Activated B cell treated with CpG ODN at 0.5 μM for 24 hours (primary cell): ENCODE measurements at regions of chr11 and their contacts with region 1.

Region 1: GRCh38 chr11:96342961-96343711 is at the start of gene MAML2:
- DNase-seq: peak; percentile 72
- ATAC-seq: peak; percentile 88
- H3K4me3 Mint-ChIP-seq: peak within 1 kb of the TSS; percentile 98
- H3K27ac Mint-ChIP-seq: peak within 1 kb of the TSS; percentile 95
- H3K4me1 Mint-ChIP-seq: peaks cover 50% of the 10 kb centered on the region
- H3K27me3 Mint-ChIP-seq: no peaks in the 10 kb centered on the region
- CTCF ChIP-seq: no peak
- total RNA-seq, gene MAML2: 20.9 and 24.8 TPM in 2 replicates

Region 2: DNA sequence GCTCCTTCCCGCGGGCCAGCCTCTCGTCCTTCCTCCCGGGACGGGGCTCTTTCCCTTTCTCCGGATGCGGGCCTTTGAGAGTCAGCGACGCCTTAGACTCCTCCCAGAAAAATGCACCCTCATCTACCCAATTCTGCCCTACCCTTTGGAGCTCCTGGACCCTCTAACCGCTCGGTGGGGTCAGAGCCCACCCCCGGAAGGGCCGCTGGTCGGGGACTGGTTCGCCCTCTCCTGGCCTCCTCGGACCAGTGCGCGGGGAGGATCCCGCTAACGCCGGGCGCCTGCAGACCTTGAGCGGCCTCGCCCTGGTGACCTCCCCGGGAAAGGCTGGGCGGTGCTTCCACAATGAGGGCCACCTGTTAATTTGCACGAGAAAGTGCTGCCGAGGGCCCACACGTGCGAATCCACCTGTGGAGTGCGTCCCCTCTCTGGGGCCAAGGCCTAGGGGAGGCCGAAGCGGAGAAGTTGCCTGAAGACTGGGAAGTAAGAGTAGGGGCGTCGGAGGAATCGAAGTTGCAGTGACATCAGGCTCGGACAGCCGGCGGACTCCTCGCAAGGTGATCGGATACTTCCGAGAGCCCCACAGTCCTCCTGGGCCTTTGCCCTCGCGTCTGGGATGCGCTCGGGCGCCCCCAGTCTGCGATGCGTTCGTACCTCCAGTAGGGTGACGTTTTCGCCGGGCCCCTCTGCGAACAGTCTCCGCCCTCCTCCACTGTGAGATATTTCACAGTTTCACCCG is 1192.0 kb before region 1 on chr11:
- CTCF ChIA-PET with region 1: interaction called, 3 read pairs
- POLR2A ChIA-PET with region 1: interaction called, 3 read pairs
- intact Hi-C with region 1: loop called (anchors 1 kb)
- DNase-seq: peak; percentile 78
- ATAC-seq: peak; percentile 90
- H3K4me3 Mint-ChIP-seq: peak overlapping the region; percentile 89
- H3K27ac Mint-ChIP-seq: peak overlapping the region; percentile 93
- H3K4me1 Mint-ChIP-seq: peaks cover 38% of the 10 kb centered on the region
- H3K27me3 Mint-ChIP-seq: no peaks in the 10 kb centered on the region
- CTCF ChIP-seq: no peak

Region 3: GRCh38 chr11:95923728-95924413 is 419.3 kb before region 1 on chr11 and contains the start of gene MTMR2:
- CTCF ChIA-PET with region 1: interaction called, 4 read pairs
- POLR2A ChIA-PET with region 1: interaction called, 4 read pairs
- intact Hi-C with region 1: loop called (anchors 2 kb)
- DNase-seq: peak; percentile 60
- ATAC-seq: peak; percentile 98
- H3K4me3 Mint-ChIP-seq: peak within 1 kb of the TSS; percentile 100
- H3K27ac Mint-ChIP-seq: peak within 1 kb of the TSS; percentile 98
- H3K4me1 Mint-ChIP-seq: peaks cover 29% of the 10 kb centered on the region
- H3K27me3 Mint-ChIP-seq: peaks cover 9% of the 10 kb centered on the region
- CTCF ChIP-seq: no peak
- total RNA-seq, gene MTMR2: 22.6 and 25.1 TPM in 2 replicates

Region 4: DNA sequence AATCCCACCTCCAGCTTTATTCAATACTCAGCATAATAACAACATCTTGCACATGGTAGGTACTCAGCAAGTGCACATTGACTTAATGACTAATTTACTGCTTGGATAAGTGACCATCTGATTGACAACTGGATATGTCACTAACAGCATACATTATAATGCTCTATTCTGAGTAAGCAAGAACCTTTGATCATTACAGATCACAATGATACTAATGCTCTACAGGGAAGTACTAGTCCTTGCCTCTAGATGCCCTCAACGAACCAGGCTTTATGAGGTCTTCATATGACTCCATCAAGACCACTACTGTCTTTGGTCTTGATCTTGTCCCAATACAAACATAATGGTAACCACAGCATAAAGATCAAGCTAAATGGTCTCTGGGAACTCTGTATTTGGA is 251.7 kb before region 1 on chr11:
- CTCF ChIA-PET with region 1: interaction called, 58 read pairs
- POLR2A ChIA-PET with region 1: interaction called, 3 read pairs
- intact Hi-C with region 1: loop called (anchors 1 kb)
- DNase-seq: no peak
- ATAC-seq: peak; percentile 77
- H3K4me3 Mint-ChIP-seq: no peak overlapping the region
- H3K27ac Mint-ChIP-seq: no peak overlapping the region
- H3K4me1 Mint-ChIP-seq: peaks cover 3% of the 10 kb centered on the region
- H3K27me3 Mint-ChIP-seq: no peaks in the 10 kb centered on the region
- CTCF ChIP-seq: no peak

Region 5: GRCh38 chr11:96215110-96215782 is 127.9 kb before region 1 on chr11:
- CTCF ChIA-PET with region 1: interaction called, 19 read pairs
- POLR2A ChIA-PET with region 1: interaction called, 14 read pairs
- intact Hi-C with region 1: loop called (anchors 1 kb)
- DNase-seq: peak; percentile 30
- ATAC-seq: peak; percentile 82
- H3K4me3 Mint-ChIP-seq: peak overlapping the region; percentile 78
- H3K27ac Mint-ChIP-seq: peak overlapping the region; percentile 99
- H3K4me1 Mint-ChIP-seq: peaks cover 83% of the 10 kb centered on the region
- H3K27me3 Mint-ChIP-seq: no peaks in the 10 kb centered on the region
- CTCF ChIP-seq: no peak

Region 6: DNA sequence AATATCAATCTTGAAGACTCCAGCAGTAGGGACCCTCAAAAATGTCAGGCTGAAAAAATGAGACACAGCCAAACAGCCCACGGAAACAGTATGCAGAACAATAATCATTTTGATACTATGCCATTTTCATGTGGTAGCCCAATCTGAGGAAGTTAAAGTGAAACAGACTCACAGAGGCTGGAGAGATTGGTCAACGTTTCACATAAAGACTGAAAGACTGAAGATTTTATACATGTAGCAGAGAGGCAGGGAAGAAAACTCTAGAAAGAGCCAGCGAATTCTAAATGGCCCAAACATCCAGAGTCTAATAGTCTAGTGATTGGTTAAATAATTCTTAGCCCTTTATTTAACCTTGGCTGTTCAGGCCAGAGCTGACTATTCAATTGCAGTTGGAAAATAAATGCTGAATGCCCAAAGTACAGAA is 49.5 kb before region 1 on chr11:
- CTCF ChIA-PET with region 1: interaction called, 6 read pairs
- POLR2A ChIA-PET with region 1: interaction called, 6 read pairs
- intact Hi-C with region 1: loop called (anchors 1 kb)
- DNase-seq: no peak
- ATAC-seq: peak; percentile 93
- H3K4me3 Mint-ChIP-seq: peak overlapping the region; percentile 62
- H3K27ac Mint-ChIP-seq: peak overlapping the region; percentile 61
- H3K4me1 Mint-ChIP-seq: peaks cover 32% of the 10 kb centered on the region
- H3K27me3 Mint-ChIP-seq: no peaks in the 10 kb centered on the region
- CTCF ChIP-seq: no peak

Region 7: DNA sequence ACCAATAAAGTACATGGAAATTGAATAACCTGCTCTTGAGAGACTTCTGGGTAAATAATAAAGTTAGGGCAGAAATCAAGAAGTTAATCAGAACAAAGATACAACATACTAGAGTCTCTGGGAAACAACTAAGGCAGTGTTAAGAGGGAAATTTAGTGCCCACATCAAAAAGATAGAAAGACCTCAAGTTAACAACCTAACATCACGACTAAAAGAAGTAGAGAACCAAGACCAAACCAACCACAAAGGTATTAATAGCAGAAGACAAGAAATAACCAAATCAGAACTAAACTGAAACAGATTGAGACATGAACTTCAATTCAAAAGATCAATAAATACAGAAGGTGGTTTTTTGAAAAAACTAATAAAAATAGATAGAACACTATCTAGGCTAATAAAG is 187.3 kb after region 1 on chr11:
- CTCF ChIA-PET with region 1: no interaction called
- POLR2A ChIA-PET with region 1: no interaction called
- intact Hi-C with region 1: no loop called
- DNase-seq: no peak
- ATAC-seq: no peak
- H3K4me3 Mint-ChIP-seq: no peak overlapping the region
- H3K27ac Mint-ChIP-seq: no peak overlapping the region
- H3K4me1 Mint-ChIP-seq: no peaks in the 10 kb centered on the region
- H3K27me3 Mint-ChIP-seq: no peaks in the 10 kb centered on the region
- CTCF ChIP-seq: no peak